ENCODE measurements at regions of chr1 and their contacts with region 1.

Region 1: GRCh38 chr1:205523891-205524793 is 19.7 kb downstream of the CDK18 start:
- DNase-seq: peak; percentile 70 to 90 (median 81)
- H3K4me3 ChIP-seq: no peak overlapping the region
- H3K27ac ChIP-seq: no peak overlapping the region
- H3K4me1 ChIP-seq: peaks cover 0 to 4% of the 10 kb centered on the region in 2 donors
- H3K27me3 ChIP-seq: no peaks in the 10 kb centered on the region
- CTCF ChIP-seq: peak; percentile 62 to 89 (median 82)
- POLR2A ChIP-seq: no peak

Region 2: DNA sequence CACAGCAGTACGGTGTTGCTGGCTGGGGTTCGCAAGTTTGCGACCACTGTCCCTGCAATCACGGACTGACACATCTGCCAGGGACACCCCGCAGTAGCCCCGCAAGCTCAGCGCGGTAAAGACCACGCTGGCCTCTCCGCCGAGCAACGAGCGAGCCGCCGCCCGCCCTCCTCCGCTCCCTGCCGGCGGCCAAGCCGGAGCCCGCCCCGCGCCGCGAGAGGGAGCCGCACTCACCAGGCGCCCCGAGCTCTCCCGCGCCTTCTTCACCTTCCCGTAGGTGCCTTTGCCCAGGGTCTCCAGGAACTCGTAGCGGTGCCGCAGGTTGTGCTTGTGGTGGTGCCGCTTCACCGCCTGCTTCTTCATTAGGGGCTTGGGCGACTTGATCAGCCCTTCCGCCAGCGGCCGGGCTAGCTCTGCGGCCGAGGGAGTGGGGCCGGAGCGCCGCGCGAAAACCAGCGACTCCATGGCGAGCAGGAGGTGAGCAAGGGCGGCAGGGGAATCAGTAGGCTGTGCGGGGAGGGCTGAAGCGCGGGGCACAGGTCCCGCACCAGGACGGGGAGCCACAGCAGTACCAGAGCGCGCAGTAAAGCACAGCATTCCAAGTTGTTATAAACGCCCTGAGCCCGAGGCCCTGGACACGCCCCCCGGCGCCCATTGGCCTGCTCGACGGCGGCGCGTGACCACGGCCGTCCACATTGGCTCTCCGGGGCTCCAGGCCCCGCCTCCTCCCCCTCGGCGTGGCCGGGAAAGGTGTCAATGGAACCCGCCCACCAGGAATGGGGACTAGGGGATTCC is 202.8 kb before region 1 on chr1 and contains the start of gene NUAK2:
- intact Hi-C with region 1: no loop called
- DNase-seq: peak; percentile 92 to 97 (median 94)
- H3K4me3 ChIP-seq: peak within 1 kb of the TSS; percentile 43 to 89 (median 81)
- H3K27ac ChIP-seq: peak within 1 kb of the TSS in 4 of 5 donors; percentile 62 to 84 (median 82)
- H3K4me1 ChIP-seq: peaks cover 30 to 50% of the 10 kb centered on the region in 2 donors
- H3K27me3 ChIP-seq: no peaks in the 10 kb centered on the region
- CTCF ChIP-seq: peak in 5 of 6 experiments; percentile 14 to 30 (median 25)
- POLR2A ChIP-seq: peak in 1 of 2 donors; percentile 94
- total RNA-seq, gene NUAK2: 1.2 to 9.9 (median 6.7) TPM

Region 3: DNA sequence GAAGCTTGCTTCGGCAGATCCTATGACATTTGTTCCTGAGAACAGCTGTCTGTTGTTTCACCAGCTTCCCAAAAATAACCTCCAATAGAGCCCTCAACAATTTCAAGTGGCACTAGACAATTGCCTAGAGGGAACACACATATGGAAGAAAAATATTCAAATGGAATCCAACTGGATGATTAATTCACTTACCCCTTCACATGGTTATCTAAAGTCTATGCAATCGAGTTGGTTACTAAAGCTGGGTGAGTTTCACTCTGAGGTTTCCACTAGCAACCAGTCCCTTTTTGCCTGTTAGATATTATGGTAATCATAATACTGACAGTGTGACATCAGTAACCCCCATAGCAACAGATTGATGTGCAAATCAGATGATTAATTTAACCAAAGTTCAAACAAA is 102.3 kb before region 1 on chr1 and contains the start of gene LEMD1:
- intact Hi-C with region 1: no loop called
- DNase-seq: no peak
- H3K4me3 ChIP-seq: no peak within 1 kb of the TSS
- H3K27ac ChIP-seq: no peak within 1 kb of the TSS
- H3K4me1 ChIP-seq: no peaks in the 10 kb centered on the region
- H3K27me3 ChIP-seq: no peaks in the 10 kb centered on the region
- CTCF ChIP-seq: no peak
- POLR2A ChIP-seq: no peak
- total RNA-seq, gene LEMD1: not detected

Region 4: DNA sequence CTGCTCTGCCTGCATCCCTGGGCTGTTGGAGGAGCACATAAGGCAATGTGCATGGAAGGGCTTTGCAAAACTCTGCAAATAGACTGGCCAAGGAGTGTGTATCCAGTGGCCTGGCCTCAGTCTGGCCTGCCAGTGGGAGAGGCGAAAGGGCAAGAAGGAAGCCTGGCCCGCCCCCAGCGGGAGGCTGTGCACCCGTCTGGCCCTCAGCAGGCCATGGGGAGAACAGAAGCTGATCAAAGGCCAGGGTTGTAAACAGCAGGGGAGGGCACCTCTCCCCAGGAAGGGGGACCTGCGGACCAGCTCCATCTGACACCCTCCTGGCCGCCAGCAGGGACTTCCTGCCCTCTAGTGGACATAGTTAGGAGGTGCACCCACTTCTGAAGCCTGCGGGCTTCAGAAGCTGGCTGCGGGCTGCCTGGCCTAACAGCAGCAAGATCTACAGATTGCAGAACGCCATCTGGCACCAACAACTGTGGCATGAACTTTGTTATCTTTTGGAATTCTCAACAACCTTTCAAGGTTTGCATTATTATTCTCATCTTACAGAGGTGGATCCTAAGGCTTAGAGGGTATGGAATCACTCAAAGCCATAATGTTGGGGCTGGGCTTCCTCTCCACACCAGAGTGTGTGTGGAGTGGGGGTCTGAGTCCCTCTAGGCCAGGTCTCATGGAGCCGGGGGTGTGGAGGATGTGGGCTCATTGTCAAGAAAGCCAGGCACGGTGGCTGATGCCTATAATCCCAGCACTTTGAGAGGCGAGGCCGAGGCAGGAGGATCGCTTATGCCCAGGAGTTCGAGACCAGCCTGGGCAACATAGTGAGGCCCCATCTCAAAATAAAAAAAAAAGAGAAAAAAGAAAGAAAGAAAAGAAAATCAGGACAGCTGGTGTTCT is 38.6 kb before region 1 on chr1:
- intact Hi-C with region 1: loop called (anchors 5 kb)
- DNase-seq: peak; percentile 64 to 87 (median 79)
- H3K4me3 ChIP-seq: no peak overlapping the region
- H3K27ac ChIP-seq: no peak overlapping the region
- H3K4me1 ChIP-seq: no peaks in the 10 kb centered on the region
- H3K27me3 ChIP-seq: no peaks in the 10 kb centered on the region
- CTCF ChIP-seq: peak; percentile 89 to 98 (median 94)
- POLR2A ChIP-seq: no peak

Region 5: DNA sequence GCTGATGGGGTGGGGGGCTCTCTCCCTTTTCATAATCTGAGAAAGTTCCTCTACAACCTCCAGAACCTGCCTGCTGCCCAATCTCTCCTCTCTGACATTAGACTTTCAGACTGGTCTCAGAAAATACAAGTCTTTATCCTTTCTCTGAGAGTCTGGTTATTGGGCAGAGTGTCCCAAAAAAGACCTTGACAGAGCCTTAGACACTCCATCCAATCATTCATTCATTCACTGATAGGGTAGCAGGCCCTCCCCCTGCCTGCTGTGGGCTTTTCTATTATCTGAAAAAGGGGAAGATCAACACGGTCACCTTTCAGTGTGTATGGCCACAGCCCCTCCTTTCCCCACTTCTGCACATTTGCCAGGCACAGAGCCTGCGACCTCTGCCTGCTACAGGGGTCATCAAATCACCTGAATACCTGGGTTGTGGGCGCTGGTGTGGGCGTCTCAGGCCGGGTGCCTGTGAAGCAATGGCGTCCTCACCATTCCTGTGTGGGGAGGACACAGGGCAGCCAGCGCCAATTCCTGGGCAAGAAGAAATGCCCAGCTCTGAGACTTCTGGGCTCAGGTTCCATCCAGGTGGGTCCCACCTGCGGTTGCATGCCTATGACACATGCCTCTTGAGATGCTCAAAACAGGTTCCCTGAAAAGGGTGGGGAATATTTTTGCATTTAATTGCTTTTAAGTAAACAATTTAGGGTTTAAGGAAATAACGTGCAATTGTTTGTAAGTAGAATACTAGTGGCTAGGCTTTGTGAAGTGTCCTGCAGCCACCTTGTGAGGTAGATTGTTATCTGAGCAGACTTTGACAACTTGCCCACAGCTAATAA is 54.9 kb after region 1 on chr1:
- intact Hi-C with region 1: no loop called
- DNase-seq: peak in 1 of 7 donors; percentile 27
- H3K4me3 ChIP-seq: no peak overlapping the region
- H3K27ac ChIP-seq: peak overlapping the region in 1 of 5 donors; percentile 21
- H3K4me1 ChIP-seq: peaks cover 0 to 4% of the 10 kb centered on the region in 2 donors
- H3K27me3 ChIP-seq: no peaks in the 10 kb centered on the region
- CTCF ChIP-seq: no peak
- POLR2A ChIP-seq: no peak

Measured in adrenal gland (tissue), 19 donors.